ENCODE measurements at regions of chr10 and their contacts with region 1.

Region 1: GRCh38 chr10:48506147-48506917 is 98.5 kb downstream of the ARHGAP22 start:
- DNase-seq: no peak
- H3K4me3 ChIP-seq: no peak overlapping the region
- H3K4me3 Mint-ChIP-seq: no peak overlapping the region
- H3K27ac ChIP-seq: no peak overlapping the region
- H3K27ac Mint-ChIP-seq: no peak overlapping the region
- H3K4me1 ChIP-seq: no peaks in the 10 kb centered on the region
- H3K4me1 Mint-ChIP-seq: no peaks in the 10 kb centered on the region
- H3K27me3 ChIP-seq: no peaks in the 10 kb centered on the region
- H3K27me3 Mint-ChIP-seq: peaks cover 0 to 6% of the 10 kb centered on the region in 2 donors

Region 2: GRCh38 chr10:48363617-48364355 is 142.5 kb before region 1 on chr10:
- CTCF ChIA-PET with region 1: interaction called, 3 read pairs
- POLR2A ChIA-PET with region 1: no interaction called
- intact Hi-C with region 1: loop called (anchors 2 kb)
- DNase-seq: peak in 4 of 5 donors; percentile 20 to 34 (median 25)
- H3K4me3 ChIP-seq: no peak overlapping the region
- H3K4me3 Mint-ChIP-seq: no peak overlapping the region
- H3K27ac ChIP-seq: no peak overlapping the region
- H3K27ac Mint-ChIP-seq: no peak overlapping the region
- H3K4me1 ChIP-seq: peaks cover 5% of the 10 kb centered on the region
- H3K4me1 Mint-ChIP-seq: peaks cover 14 to 26% (median 20%) of the 10 kb centered on the region in 4 donors
- H3K27me3 ChIP-seq: no peaks in the 10 kb centered on the region
- H3K27me3 Mint-ChIP-seq: no peaks in the 10 kb centered on the region

Region 3: DNA sequence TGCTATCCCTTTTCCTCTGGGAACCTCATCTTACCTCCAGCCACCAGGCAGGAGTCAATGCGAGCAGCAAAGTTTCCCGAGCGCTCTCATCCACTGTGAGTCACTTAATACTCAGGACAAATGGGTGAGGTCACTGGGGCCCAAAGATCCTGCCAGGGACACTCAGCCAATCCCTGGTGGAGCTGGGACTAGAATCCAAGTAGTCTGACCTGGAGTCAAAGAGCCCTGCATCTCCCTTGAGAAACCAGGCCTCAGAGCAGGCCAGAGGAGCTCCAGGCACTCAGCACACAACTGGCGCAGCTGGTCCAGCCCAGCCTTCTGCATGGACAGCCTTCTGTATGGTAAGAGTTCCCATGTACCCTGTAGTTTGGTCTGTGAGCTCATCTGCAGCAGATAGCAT is 57.5 kb before region 1 on chr10:
- CTCF ChIA-PET with region 1: no interaction called
- POLR2A ChIA-PET with region 1: no interaction called
- intact Hi-C with region 1: no loop called
- DNase-seq: no peak
- H3K4me3 ChIP-seq: no peak overlapping the region
- H3K4me3 Mint-ChIP-seq: no peak overlapping the region
- H3K27ac ChIP-seq: no peak overlapping the region
- H3K27ac Mint-ChIP-seq: no peak overlapping the region
- H3K4me1 ChIP-seq: no peaks in the 10 kb centered on the region
- H3K4me1 Mint-ChIP-seq: no peaks in the 10 kb centered on the region
- H3K27me3 ChIP-seq: no peaks in the 10 kb centered on the region
- H3K27me3 Mint-ChIP-seq: peaks cover 0 to 2% of the 10 kb centered on the region in 2 donors